H1 (cell line): ENCODE measurements at regions of chr5 and their contacts with region 1.

Region 1: DNA sequence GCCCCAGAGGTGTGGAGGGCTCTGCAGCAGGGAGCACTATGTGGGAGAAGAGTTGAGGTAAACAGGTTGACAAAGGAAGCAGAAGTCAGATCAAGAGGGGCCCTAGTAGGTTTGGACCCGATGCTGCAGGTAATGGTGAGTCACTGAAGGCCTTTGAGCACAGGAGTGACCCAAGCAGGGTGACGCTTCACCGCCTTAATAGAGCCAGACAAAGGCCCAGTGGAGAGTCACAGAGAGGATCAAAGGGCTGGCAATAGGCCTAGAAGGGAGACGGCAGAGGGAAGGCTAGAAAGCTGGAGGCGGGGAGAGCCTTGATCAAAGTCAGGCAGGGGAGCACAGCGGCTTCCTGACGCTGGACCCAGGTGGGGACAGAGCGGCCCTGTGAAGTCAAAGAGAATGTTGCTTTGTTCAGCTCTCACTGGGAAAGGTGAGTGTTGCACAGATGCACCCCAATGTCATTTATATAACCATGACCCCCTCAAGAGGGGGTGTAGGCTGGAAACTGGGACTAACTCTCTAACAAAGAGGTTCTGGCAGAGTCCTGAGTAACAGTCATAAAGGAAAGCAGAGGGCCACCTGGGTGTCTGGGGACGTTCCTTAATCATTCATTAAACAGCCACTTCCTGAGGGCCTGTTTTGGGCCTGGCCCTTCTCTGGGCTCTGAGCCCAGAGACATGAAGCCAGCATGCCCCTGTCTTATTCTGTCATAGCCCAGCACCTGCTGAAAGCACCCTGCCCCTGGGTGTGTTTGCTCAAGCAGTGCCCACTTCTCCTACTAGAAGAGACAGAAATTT is 9.8 kb upstream of the CPLX2 start:
- DNase-seq: no peak
- H3K4me3 ChIP-seq: no peak overlapping the region
- H3K27ac ChIP-seq: no peak overlapping the region
- H3K4me1 ChIP-seq: peaks cover 0 to 7% (median 3%) of the 10 kb centered on the region in 4 experiments; a peak in 2 of 7 replicates
- H3K27me3 ChIP-seq: no peaks in the 10 kb centered on the region; a peak in 1 of 7 replicates
- CTCF ChIP-seq: no peak
- EP300 ChIP-seq: no peak
- POLR2A ChIP-seq: no peak
- RAD21 ChIP-seq: no peak

Region 2: DNA sequence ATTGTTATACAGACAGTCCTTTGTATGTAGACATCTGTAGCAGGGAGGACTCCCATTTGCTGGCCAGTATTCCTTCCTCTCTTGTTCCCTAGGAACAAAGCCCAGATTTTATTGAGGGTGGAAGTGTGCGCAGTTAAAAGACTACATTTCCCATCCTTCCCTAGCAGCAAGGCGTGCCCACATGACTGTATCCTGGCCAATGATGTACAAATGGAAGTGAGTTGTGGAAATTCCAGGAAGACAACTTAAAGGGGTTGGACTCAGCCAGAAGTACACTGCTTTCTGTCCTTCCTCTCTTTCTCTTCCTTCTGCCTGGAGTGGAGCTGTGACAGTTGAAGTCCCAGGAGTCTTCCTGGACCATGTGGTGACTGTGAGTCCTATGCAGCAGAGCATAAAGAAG is 114.7 kb before region 1 on chr5:
- CTCF ChIA-PET with region 1: no interaction called
- POLR2A ChIA-PET with region 1: no interaction called
- DNase-seq: no peak
- H3K4me3 ChIP-seq: peak overlapping the region in 1 of 4 experiments; percentile 37; a peak in 2 of 8 replicates
- H3K27ac ChIP-seq: no peak overlapping the region
- H3K4me1 ChIP-seq: peaks cover 0 to 3% (median 2%) of the 10 kb centered on the region in 4 experiments; a peak in 2 of 7 replicates
- H3K27me3 ChIP-seq: 0 out of 7 replicates have a peak, but pooled peaks cover 0 to 2% (median 0%) of the 10 kb centered on the region in 4 experiments
- CTCF ChIP-seq: no peak
- EP300 ChIP-seq: no peak
- POLR2A ChIP-seq: no peak
- RAD21 ChIP-seq: no peak

Region 3: DNA sequence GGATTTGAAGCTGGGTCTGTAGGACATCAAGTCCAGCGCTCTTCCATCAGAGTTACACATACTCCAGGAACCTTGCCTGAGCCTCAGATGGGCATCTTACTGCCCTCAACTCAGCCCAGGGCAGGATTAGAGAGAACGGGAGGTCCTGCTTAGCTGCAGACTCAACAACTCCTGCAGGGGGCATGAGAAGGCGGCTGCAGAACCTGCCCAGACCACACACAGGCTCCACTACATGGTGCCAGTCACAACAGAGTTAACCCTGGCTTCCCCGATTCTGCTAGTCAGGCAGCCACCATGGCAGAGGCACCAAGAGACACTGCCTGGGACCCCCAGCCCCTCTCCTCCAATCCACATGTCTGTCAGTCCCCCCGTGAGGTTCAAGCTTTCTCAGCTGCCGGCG is 14.0 kb before region 1 on chr5:
- CTCF ChIA-PET with region 1: interaction called, 19 read pairs
- POLR2A ChIA-PET with region 1: interaction called, 3 read pairs
- DNase-seq: no peak
- H3K4me3 ChIP-seq: no peak overlapping the region
- H3K27ac ChIP-seq: no peak overlapping the region
- H3K4me1 ChIP-seq: peaks cover 0 to 21% (median 14%) of the 10 kb centered on the region in 4 experiments; a peak in 6 of 7 replicates
- H3K27me3 ChIP-seq: no peaks in the 10 kb centered on the region
- CTCF ChIP-seq: peak in 2 of 3 experiments; percentile 83; a peak in 3 of 4 replicates
- EP300 ChIP-seq: no peak
- POLR2A ChIP-seq: no peak
- RAD21 ChIP-seq: peak; percentile 59 to 74